ENCODE measurements at regions of chr7 and their contacts with region 1.

Region 1: DNA sequence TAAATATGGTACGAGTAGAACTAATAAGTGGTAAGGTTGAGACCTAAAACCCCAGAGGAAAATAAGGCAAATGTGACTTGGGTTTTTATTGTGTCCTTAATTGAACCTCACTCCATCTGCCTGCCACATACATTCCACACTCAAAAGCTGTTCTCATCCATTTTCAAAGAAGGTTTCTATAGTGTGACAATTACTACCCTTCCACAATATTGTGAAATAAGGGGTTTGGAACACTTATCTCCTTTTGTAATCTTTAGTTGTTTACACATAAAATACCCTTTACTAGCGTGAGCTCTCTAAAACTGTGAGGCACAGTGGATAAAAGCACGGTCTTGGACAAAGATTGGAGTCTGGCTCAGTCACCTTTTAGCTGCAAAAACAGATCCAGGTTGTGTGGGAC is 166.6 kb downstream of the THSD7A start:
- DNase-seq: no peak
- ATAC-seq: no peak

Region 2: DNA sequence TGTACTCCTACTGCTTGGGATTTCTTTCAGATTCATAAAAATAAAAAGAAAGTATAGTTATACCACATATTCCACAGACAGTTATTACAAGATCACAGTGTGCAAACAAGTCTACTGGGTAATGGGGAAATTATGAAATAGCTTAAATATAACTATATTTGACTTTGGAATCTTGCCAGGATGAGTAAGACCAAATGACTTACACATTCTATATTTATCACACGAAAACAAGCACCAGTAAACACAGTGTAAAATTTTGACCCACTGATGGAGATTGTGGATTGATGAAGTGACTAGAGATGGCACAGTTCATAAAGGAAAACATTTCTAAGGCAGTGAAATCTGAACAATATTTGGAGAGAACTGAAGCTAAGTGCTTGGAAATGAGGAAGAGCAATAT is 173.1 kb before region 1 on chr7:
- intact Hi-C with region 1: no loop called
- DNase-seq: no peak
- ATAC-seq: no peak

Region 3: DNA sequence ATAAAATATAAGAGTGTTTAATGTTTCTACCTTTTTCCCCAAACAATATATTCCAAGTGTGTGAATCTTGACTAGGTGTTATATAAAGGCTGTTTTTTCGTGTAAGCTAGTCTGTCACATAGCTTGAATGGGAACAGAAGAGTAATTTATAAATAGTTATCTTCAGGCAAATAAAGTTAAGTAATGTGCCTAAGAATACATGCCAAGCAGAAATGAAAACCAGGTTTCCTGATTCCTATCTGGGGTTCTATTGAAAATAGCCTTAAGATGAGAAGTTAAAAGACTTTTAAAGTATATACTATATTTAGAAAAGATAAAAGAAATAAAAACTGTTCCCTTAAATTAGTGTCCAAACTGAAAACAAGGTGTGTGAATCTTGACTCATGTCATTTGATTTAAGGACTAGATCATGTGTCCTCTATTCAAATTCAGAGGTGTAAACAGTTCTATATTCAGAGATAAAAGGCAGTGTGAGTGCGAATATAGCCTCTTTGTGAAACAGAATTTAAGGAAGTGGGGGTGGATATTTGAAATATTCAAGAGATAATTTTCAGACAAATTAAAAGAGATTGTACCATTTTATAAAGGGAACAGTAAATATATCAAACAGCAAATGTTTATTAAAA is 80.8 kb before region 1 on chr7:
- intact Hi-C with region 1: no loop called
- DNase-seq: no peak
- ATAC-seq: no peak

Region 4: DNA sequence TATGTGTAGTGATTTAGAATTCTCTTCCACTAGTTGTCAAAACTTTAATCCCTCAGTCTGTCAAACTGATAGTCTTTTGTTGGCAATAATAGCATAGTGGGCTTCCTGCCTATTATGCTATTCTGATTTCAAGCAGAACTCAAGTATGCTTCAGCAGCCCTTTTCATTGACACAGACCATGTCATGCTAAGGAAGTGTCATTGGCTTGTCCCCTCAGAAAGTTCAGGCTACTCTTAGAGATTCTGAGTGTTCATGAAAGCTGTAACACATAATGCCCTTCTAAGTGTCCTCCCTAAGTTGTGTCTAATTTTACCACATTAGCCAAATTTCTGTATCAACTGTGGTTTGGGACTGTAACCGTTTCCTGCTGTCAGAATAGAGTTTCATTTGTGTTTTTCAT is 32.0 kb before region 1 on chr7:
- intact Hi-C with region 1: loop called in 1 of 2 experiments (anchors 5 kb)
- DNase-seq: no peak
- ATAC-seq: no peak